Activated CD8-positive, alpha-beta T cell treated with anti-CD3 and anti-CD28 coated beads for 36 hours (primary cell): ENCODE measurements at regions of chr3 and their contacts with region 1.

Region 1: GRCh38 chr3:128426128-128426921 is 40.4 kb downstream of the DNAJB8 start:
- DNase-seq: peak; percentile 55
- ATAC-seq: peak; percentile 99
- H3K4me3 Mint-ChIP-seq: no peak overlapping the region
- H3K27ac Mint-ChIP-seq: no peak overlapping the region
- H3K4me1 Mint-ChIP-seq: no peaks in the 10 kb centered on the region
- H3K27me3 Mint-ChIP-seq: peaks cover 16% of the 10 kb centered on the region
- CTCF ChIP-seq: peak; percentile 98

Region 2: GRCh38 chr3:128170805-128171516 is 255.4 kb before region 1 on chr3:
- CTCF ChIA-PET with region 1: no interaction called
- POLR2A ChIA-PET with region 1: no interaction called
- intact Hi-C with region 1: no loop called
- DNase-seq: no peak
- ATAC-seq: no peak
- H3K4me3 Mint-ChIP-seq: no peak overlapping the region
- H3K27ac Mint-ChIP-seq: no peak overlapping the region
- H3K4me1 Mint-ChIP-seq: peaks cover 21% of the 10 kb centered on the region
- H3K27me3 Mint-ChIP-seq: no peaks in the 10 kb centered on the region
- CTCF ChIP-seq: no peak

Region 3: GRCh38 chr3:128442059-128442458 is 15.7 kb after region 1 on chr3:
- CTCF ChIA-PET with region 1: interaction called, 21 read pairs
- POLR2A ChIA-PET with region 1: no interaction called
- intact Hi-C with region 1: no loop called
- DNase-seq: no peak
- ATAC-seq: no peak
- H3K4me3 Mint-ChIP-seq: no peak overlapping the region
- H3K27ac Mint-ChIP-seq: no peak overlapping the region
- H3K4me1 Mint-ChIP-seq: peaks cover 2% of the 10 kb centered on the region
- H3K27me3 Mint-ChIP-seq: peaks cover 6% of the 10 kb centered on the region
- CTCF ChIP-seq: no peak

Region 4: GRCh38 chr3:128489855-128490649 is 63.7 kb after region 1 on chr3:
- CTCF ChIA-PET with region 1: interaction called, 18 read pairs
- POLR2A ChIA-PET with region 1: interaction called, 5 read pairs
- intact Hi-C with region 1: no loop called
- DNase-seq: no peak
- ATAC-seq: no peak
- H3K4me3 Mint-ChIP-seq: peak overlapping the region; percentile 56
- H3K27ac Mint-ChIP-seq: no peak overlapping the region
- H3K4me1 Mint-ChIP-seq: peaks cover 25% of the 10 kb centered on the region
- H3K27me3 Mint-ChIP-seq: peaks cover 64% of the 10 kb centered on the region
- CTCF ChIP-seq: no peak

Region 5: DNA sequence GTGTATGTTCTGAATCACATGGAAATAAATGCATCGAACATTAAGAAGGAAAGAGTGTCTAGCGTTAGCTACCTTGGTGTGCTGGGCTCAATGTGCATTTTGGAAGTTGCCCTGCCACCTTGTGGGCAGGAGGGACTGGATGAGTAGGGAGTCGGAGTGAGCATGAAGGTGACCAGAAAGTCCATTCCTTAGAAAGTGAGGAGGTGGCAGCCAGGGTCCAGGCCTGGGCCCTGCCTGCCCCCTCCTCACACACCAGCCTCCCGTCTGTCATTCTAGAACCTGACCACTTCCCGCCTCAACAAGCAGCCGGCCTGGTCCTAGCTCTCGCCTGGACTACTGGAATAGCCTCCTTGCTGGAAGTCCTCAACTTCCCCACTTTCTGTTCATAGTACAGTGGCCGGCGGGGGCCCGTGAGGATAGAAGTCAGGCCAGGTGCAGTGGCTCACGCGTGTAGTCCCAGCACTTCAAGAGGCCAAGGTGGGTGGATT is 76.9 kb after region 1 on chr3:
- CTCF ChIA-PET with region 1: interaction called, 46 read pairs
- POLR2A ChIA-PET with region 1: no interaction called
- intact Hi-C with region 1: loop called (anchors 2 kb)
- DNase-seq: no peak
- ATAC-seq: no peak
- H3K4me3 Mint-ChIP-seq: no peak overlapping the region
- H3K27ac Mint-ChIP-seq: no peak overlapping the region
- H3K4me1 Mint-ChIP-seq: no peaks in the 10 kb centered on the region
- H3K27me3 Mint-ChIP-seq: peaks cover 28% of the 10 kb centered on the region
- CTCF ChIP-seq: no peak

Region 6: GRCh38 chr3:128607710-128608048 is 181.4 kb after region 1 on chr3:
- CTCF ChIA-PET with region 1: interaction called, 34 read pairs
- POLR2A ChIA-PET with region 1: no interaction called
- intact Hi-C with region 1: loop called (anchors 5 kb)
- DNase-seq: no peak
- ATAC-seq: no peak
- H3K4me3 Mint-ChIP-seq: no peak overlapping the region
- H3K27ac Mint-ChIP-seq: no peak overlapping the region
- H3K4me1 Mint-ChIP-seq: no peaks in the 10 kb centered on the region
- H3K27me3 Mint-ChIP-seq: peaks cover 3% of the 10 kb centered on the region
- CTCF ChIP-seq: no peak